IMR-90 (cell line): ENCODE measurements at regions of chr18 and their contacts with region 1.

Region 1: DNA sequence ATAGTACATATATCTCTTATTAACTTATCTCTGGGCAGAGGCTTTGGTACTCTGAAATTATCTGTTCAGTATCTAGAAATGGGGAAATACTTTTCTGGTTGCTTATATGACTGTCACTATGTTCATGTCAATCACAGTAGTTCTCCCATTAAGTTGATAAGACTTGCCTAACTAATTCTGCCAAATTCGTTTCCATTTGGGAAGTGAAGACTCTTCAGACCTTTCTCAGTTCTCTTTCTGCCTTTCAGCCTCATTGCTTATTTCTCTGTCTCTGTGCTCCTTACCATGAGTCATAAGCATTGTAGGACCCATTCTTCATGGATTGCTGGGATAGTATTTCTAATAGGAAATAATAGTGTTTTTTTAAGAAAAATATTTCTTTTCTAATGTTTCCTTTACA is 113.5 kb downstream of the PHLPP1 start:
- DNase-seq: peak; percentile 54
- ATAC-seq: peak; percentile 53; the same call in 1 of the 2 replicates
- H3K4me3 ChIP-seq: no peak overlapping the region
- H3K27ac ChIP-seq: no peak overlapping the region
- H3K4me1 ChIP-seq: peaks cover 1% of the 10 kb centered on the region; the same call in 1 of the 2 replicates
- H3K27me3 ChIP-seq: no peaks in the 10 kb centered on the region
- CTCF ChIP-seq: no peak
- POLR2A ChIP-seq: no peak
- RAD21 ChIP-seq: no peak

Region 2: DNA sequence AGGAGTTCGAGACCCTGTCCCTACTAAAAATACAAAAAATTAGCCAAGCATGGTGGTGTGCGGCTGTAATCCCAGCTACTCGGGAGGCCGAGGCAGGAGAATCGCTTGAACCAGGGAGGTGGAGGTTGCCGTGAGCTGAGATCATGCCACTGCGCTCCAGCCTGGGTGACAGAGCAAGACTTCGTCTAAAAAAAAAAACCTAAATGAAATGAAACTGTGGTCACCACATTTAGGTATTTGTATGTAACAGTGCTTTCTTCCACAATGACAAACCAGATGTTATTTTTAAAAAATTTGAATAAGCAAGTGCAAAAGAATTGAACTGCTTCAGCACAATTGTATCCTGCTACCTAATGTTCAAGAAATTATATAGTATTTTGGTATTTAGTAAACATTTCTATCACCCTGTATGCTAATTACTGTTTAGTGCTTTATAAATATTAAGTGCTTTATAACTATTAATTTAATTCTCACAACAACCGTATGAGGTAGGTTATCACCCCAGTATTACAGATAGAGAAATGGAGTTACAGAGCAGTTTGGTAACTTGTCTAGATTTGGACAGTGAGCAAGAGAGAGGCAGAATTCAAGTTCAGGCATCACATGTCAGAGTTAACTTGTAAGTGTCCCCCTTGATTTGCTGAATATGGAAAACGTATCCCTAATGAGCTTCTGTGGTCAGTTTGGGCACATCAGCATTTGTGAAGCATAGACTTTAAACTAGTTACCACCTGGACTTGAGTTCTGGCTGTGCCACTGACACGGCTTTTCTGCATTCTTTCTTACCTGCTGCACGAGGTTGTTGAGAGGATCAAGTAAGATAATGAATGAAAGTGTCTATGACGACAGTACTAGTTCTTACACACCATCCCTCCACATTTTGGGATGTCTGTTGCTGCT is 99.1 kb before region 1 on chr18:
- CTCF ChIA-PET with region 1: interaction called, 12 read pairs
- POLR2A ChIA-PET with region 1: no interaction called
- dilution Hi-C with region 1: no loop called
- in situ Hi-C with region 1: no loop called
- intact Hi-C with region 1: no loop called
- DNase-seq: no peak
- ATAC-seq: no peak
- H3K4me3 ChIP-seq: no peak overlapping the region
- H3K27ac ChIP-seq: no peak overlapping the region
- H3K4me1 ChIP-seq: no peaks in the 10 kb centered on the region
- H3K27me3 ChIP-seq: no peaks in the 10 kb centered on the region
- CTCF ChIP-seq: no peak
- POLR2A ChIP-seq: no peak
- RAD21 ChIP-seq: no peak

Region 3: GRCh38 chr18:62784966-62785413 is 43.9 kb before region 1 on chr18:
- CTCF ChIA-PET with region 1: no interaction called
- POLR2A ChIA-PET with region 1: no interaction called
- dilution Hi-C with region 1: no loop called
- in situ Hi-C with region 1: no loop called
- intact Hi-C with region 1: loop called (anchors 5 kb)
- DNase-seq: peak; percentile 84
- ATAC-seq: peak; percentile 77
- H3K4me3 ChIP-seq: no peak overlapping the region
- H3K27ac ChIP-seq: no peak overlapping the region
- H3K4me1 ChIP-seq: peaks cover 8% of the 10 kb centered on the region
- H3K27me3 ChIP-seq: no peaks in the 10 kb centered on the region
- CTCF ChIP-seq: no peak
- POLR2A ChIP-seq: no peak
- RAD21 ChIP-seq: no peak